ENCODE measurements at regions of chr1 and their contacts with region 1.

Region 1: GRCh38 chr1:113904674-113905434 is at the starts of genes AP4B1 and DCLRE1B:
- DNase-seq: peak; percentile 99
- ATAC-seq: peak; percentile 95 to 97
- H3K4me3 ChIP-seq: peak within 1 kb of the TSS; percentile 79 to 93 (median 84)
- H3K27ac ChIP-seq: peak within 1 kb of the TSS; percentile 90 to 91 (median 90)
- H3K4me1 ChIP-seq: peaks cover 20 to 22% of the 10 kb centered on the region in 2 donors
- H3K27me3 ChIP-seq: no peaks in the 10 kb centered on the region
- CTCF ChIP-seq: peak; percentile 50 to 83 (median 78)
- POLR2A ChIP-seq: peak; percentile 65 to 71
- total RNA-seq, gene AP4B1: 6.5 to 11.2 (median 8.4) TPM
- total RNA-seq, gene DCLRE1B: 1.4 to 3.3 (median 1.7) TPM

Region 2: GRCh38 chr1:112619520-112620376 is 1285.1 kb before region 1 on chr1 and contains the start of gene CAPZA1:
- in situ Hi-C with region 1: loop called in 1 of 4 experiments (anchors 25 kb)
- intact Hi-C with region 1: no loop called
- DNase-seq: peak; percentile 86 to 90
- ATAC-seq: peak; percentile 94
- H3K4me3 ChIP-seq: peak within 1 kb of the TSS; percentile 79 to 100 (median 95)
- H3K27ac ChIP-seq: peak within 1 kb of the TSS; percentile 97 to 99 (median 98)
- H3K4me1 ChIP-seq: peaks cover 33 to 42% of the 10 kb centered on the region in 2 donors
- H3K27me3 ChIP-seq: no peaks in the 10 kb centered on the region
- CTCF ChIP-seq: no peak
- POLR2A ChIP-seq: peak; percentile 85 to 94
- total RNA-seq, gene CAPZA1: 27.1 to 58.1 (median 35.2) TPM

Region 3: DNA sequence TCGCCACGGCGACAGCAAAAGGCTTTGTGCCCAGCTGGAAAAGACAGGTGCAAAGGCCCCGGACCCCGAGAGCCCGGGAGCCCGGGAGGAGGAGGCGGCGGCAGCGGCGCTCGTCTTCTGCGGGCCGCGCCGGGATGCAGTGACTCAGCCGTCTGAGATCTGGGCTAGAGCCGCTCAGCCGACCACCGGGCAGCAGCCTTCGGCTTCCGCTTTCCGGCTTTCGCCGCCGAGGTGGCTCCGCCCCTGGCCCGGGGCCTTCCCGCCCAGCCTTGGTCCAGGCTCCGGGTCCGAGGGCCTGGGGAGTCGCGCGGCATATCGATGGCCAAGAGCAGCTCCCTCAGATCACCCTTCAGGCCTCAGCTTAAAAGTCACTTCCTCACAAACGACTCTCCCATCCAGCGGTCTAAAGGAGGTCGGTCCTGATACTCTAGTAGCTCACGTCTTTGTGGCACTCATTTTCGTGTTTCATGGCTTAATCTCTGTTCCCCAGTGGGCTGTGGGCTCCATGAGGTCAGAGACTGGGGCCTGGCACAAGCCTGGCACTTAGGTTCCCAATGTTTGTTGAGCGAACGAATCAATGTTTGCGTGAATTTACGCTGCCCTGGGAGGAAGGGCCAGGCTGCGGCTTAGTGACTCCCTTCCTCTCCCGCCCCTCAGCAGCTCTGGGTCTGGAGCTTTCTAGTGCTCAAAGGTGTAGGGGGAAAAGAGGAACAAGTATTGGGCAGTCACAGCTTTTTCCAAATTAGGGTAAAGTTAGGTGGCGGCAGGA is 145.3 kb before region 1 on chr1 and contains the start of gene PHTF1:
- in situ Hi-C with region 1: no loop called
- intact Hi-C with region 1: loop called (anchors 2 kb)
- DNase-seq: peak; percentile 23 to 40
- ATAC-seq: peak; percentile 75 to 80
- H3K4me3 ChIP-seq: peak within 1 kb of the TSS; percentile 77 to 91 (median 90)
- H3K27ac ChIP-seq: peak within 1 kb of the TSS; percentile 84 to 94 (median 89)
- H3K4me1 ChIP-seq: peaks cover 13 to 17% of the 10 kb centered on the region in 2 donors
- H3K27me3 ChIP-seq: no peaks in the 10 kb centered on the region
- CTCF ChIP-seq: no peak
- POLR2A ChIP-seq: peak; percentile 55 to 67
- total RNA-seq, gene PHTF1: 6.7 to 20.0 (median 9.9) TPM

Region 4: GRCh38 chr1:113826162-113826561 is 78.7 kb before region 1 on chr1:
- in situ Hi-C with region 1: loop called in 3 of 4 experiments (anchors 5 to 10 kb)
- intact Hi-C with region 1: no loop called
- DNase-seq: no peak
- ATAC-seq: no peak
- H3K4me3 ChIP-seq: no peak overlapping the region
- H3K27ac ChIP-seq: no peak overlapping the region
- H3K4me1 ChIP-seq: no peaks in the 10 kb centered on the region
- H3K27me3 ChIP-seq: no peaks in the 10 kb centered on the region
- CTCF ChIP-seq: no peak
- POLR2A ChIP-seq: no peak

Region 5: GRCh38 chr1:113928941-113929749 is 24.3 kb after region 1 on chr1 and contains the start of gene HIPK1:
- in situ Hi-C with region 1: no loop called
- intact Hi-C with region 1: loop called (anchors 1 kb)
- DNase-seq: peak; percentile 86 to 88
- ATAC-seq: peak; percentile 88 to 89
- H3K4me3 ChIP-seq: peak within 1 kb of the TSS; percentile 86 to 98 (median 90)
- H3K27ac ChIP-seq: peak within 1 kb of the TSS; percentile 92 to 98 (median 94)
- H3K4me1 ChIP-seq: peaks cover 45% of the 10 kb centered on the region in 2 donors
- H3K27me3 ChIP-seq: no peaks in the 10 kb centered on the region
- CTCF ChIP-seq: peak in 1 of 5 experiments; percentile 28
- POLR2A ChIP-seq: peak; percentile 79 to 82
- total RNA-seq, gene HIPK1: 54.4 to 67.6 (median 60.0) TPM

Region 6: GRCh38 chr1:113965703-113966412 is 61.0 kb after region 1 on chr1:
- in situ Hi-C with region 1: no loop called
- intact Hi-C with region 1: no loop called
- DNase-seq: no peak
- ATAC-seq: no peak
- H3K4me3 ChIP-seq: no peak overlapping the region
- H3K27ac ChIP-seq: no peak overlapping the region
- H3K4me1 ChIP-seq: no peaks in the 10 kb centered on the region
- H3K27me3 ChIP-seq: no peaks in the 10 kb centered on the region
- CTCF ChIP-seq: no peak
- POLR2A ChIP-seq: no peak

Region 7: GRCh38 chr1:114670083-114671010 is 765.5 kb after region 1 on chr1:
- in situ Hi-C with region 1: no loop called
- intact Hi-C with region 1: loop called (anchors 5 kb)
- DNase-seq: peak; percentile 95 to 97
- ATAC-seq: peak; percentile 74 to 78
- H3K4me3 ChIP-seq: peak overlapping the region; percentile 65 to 93 (median 91)
- H3K27ac ChIP-seq: peak overlapping the region; percentile 89 to 100 (median 96)
- H3K4me1 ChIP-seq: peaks cover 15 to 40% of the 10 kb centered on the region in 2 donors
- H3K27me3 ChIP-seq: no peaks in the 10 kb centered on the region
- CTCF ChIP-seq: peak in 2 of 5 experiments; percentile 15 to 49
- POLR2A ChIP-seq: peak; percentile 86 to 95

Measured in gastrocnemius medialis (tissue), 4 donors.